ENCODE measurements at regions of chr14 and their contacts with region 1.

Region 1: GRCh38 chr14:51957950-51958349 is 31.4 kb upstream of the RTRAF start:
- DNase-seq: no peak
- ATAC-seq: no peak
- H3K4me3 ChIP-seq: no peak overlapping the region
- H3K27ac ChIP-seq: no peak overlapping the region
- H3K4me1 ChIP-seq: no peaks in the 10 kb centered on the region
- H3K27me3 ChIP-seq: no peaks in the 10 kb centered on the region
- CTCF ChIP-seq: no peak
- EP300 ChIP-seq: no peak
- POLR2A ChIP-seq: no peak
- RAD21 ChIP-seq: no peak

Region 2: GRCh38 chr14:51901475-51902024 is 56.4 kb before region 1 on chr14:
- CTCF ChIA-PET with region 1: no interaction called
- POLR2A ChIA-PET with region 1: no interaction called
- RAD21 ChIA-PET with region 1: no interaction called
- SMC1A ChIA-PET with region 1: no interaction called
- in situ Hi-C with region 1: no loop called
- intact Hi-C with region 1: no loop called
- DNase-seq: no peak
- ATAC-seq: no peak
- H3K4me3 ChIP-seq: no peak overlapping the region
- H3K27ac ChIP-seq: no peak overlapping the region
- H3K4me1 ChIP-seq: no peaks in the 10 kb centered on the region
- H3K27me3 ChIP-seq: no peaks in the 10 kb centered on the region
- CTCF ChIP-seq: no peak
- EP300 ChIP-seq: no peak
- POLR2A ChIP-seq: no peak
- RAD21 ChIP-seq: no peak

Region 3: DNA sequence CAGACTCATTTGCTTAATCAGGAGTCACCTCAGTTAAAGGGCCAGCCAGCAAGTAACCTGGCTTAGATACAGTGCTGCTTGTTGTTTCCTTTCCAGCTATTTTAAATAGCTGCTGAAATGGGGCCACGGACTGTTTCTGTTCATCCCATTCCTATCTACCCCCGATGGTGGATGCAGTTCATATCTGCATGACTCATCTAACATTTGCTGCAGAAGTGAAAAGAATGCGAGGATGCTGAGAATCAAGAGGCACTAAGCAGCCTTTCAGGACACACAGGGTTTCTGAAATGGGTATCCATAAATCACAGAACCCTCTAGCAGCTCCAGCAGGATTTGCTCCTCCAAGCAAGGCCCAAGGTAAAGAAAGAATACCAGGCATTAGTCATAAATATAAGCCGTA is 28.8 kb before region 1 on chr14:
- CTCF ChIA-PET with region 1: no interaction called
- POLR2A ChIA-PET with region 1: interaction called, 11 read pairs
- RAD21 ChIA-PET with region 1: no interaction called
- SMC1A ChIA-PET with region 1: interaction called, 4 read pairs
- in situ Hi-C with region 1: no loop called
- intact Hi-C with region 1: no loop called
- DNase-seq: no peak
- ATAC-seq: no peak
- H3K4me3 ChIP-seq: no peak overlapping the region
- H3K27ac ChIP-seq: no peak overlapping the region
- H3K4me1 ChIP-seq: no peaks in the 10 kb centered on the region
- H3K27me3 ChIP-seq: no peaks in the 10 kb centered on the region
- CTCF ChIP-seq: no peak
- EP300 ChIP-seq: no peak
- POLR2A ChIP-seq: no peak
- RAD21 ChIP-seq: no peak

Region 4: GRCh38 chr14:52015411-52016030 is 57.6 kb after region 1 on chr14:
- CTCF ChIA-PET with region 1: no interaction called
- POLR2A ChIA-PET with region 1: no interaction called
- RAD21 ChIA-PET with region 1: no interaction called
- SMC1A ChIA-PET with region 1: no interaction called
- in situ Hi-C with region 1: no loop called
- intact Hi-C with region 1: no loop called
- DNase-seq: no peak
- ATAC-seq: peak; percentile 50
- H3K4me3 ChIP-seq: no peak overlapping the region
- H3K27ac ChIP-seq: no peak overlapping the region
- H3K4me1 ChIP-seq: no peaks in the 10 kb centered on the region
- H3K27me3 ChIP-seq: no peaks in the 10 kb centered on the region
- CTCF ChIP-seq: peak; percentile 8 to 29 (median 21); a peak in 3 of 6 replicates
- EP300 ChIP-seq: no peak
- POLR2A ChIP-seq: no peak
- RAD21 ChIP-seq: no peak

Region 5: DNA sequence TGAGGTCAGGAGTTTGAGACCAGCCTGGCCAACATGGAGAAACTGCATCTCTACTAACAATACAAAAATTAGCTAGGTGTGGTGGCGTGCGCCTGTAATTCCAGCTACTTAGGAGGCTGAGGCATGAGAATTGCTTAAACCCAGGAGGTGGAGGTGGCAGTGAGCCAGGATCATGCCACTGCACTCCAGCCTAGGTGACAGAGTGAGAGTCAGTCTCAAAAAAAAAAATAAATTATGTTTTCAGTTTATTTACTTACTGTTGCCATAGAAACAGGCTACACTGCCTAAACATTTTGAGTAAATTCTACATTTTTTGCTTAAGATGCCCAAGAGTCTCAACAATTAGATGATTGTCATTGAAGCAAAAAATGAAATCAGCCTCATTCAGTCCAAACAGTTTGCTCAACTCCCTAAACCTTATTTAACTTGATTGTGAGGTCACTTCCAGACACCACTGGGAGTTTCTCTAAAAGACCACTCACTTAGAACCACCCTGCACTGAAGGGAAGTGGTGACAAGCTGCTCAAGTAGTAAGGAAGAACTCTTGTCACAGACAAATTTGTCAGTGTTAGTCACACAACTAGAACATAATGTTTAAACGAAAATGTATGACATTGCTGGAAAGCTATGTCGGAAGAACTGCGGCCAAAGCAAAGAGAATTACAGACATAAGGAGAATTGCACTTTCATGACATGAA is 843.2 kb after region 1 on chr14:
- CTCF ChIA-PET with region 1: no interaction called
- POLR2A ChIA-PET with region 1: no interaction called
- RAD21 ChIA-PET with region 1: no interaction called
- SMC1A ChIA-PET with region 1: no interaction called
- in situ Hi-C with region 1: no loop called
- intact Hi-C with region 1: no loop called
- DNase-seq: no peak
- ATAC-seq: peak; percentile 46
- H3K4me3 ChIP-seq: no peak overlapping the region
- H3K27ac ChIP-seq: no peak overlapping the region
- H3K4me1 ChIP-seq: no peaks in the 10 kb centered on the region
- H3K27me3 ChIP-seq: no peaks in the 10 kb centered on the region
- CTCF ChIP-seq: no peak
- EP300 ChIP-seq: no peak
- POLR2A ChIP-seq: no peak
- RAD21 ChIP-seq: no peak